ENCODE measurements at regions of chr4 and their contacts with region 1.

Region 1: DNA sequence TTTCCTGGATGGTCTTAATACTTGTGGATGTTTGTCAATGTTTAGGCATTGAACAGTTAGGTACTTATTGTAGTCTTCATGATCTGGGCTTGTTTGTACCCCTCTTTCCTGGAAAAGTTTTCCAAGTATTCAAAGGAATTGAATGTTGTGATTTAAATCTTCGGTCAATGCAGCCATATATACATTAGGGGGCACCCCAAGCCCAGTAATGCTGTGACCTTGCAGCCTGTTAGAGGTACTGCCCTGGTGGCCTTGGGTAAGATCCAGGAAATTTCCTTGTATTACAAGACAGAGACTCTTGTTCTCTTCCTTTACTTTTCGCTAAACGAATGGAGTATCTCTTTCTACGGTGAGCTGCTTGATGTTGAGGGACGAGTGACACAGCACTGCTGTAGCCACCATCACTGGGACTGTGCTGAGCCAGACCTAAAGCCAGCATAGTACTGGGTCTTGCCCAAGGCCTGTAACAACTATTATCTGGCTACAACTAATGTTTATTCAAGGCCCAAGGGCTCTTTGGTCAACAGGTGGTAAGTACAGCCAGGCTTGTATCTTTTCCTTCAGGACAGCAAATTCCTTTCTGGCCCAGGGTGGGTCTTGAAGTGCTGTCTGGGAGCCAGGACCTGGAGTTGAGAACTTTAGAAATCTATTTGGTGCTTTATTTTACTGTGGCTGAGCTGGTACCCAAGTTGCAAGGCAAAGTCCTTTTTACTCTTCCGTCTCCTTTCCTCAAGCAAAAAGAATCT is 118.3 kb upstream of the ATOH1 start:
- DNase-seq: peak; percentile 6
- H3K4me3 Mint-ChIP-seq: no peak overlapping the region
- H3K27ac Mint-ChIP-seq: no peak overlapping the region
- H3K4me1 Mint-ChIP-seq: no peaks in the 10 kb centered on the region
- H3K27me3 Mint-ChIP-seq: no peaks in the 10 kb centered on the region
- CTCF ChIP-seq: no peak

Region 2: GRCh38 chr4:93764639-93765246 is 54.5 kb after region 1 on chr4:
- CTCF ChIA-PET with region 1: no interaction called
- intact Hi-C with region 1: loop called (anchors 1 kb)
- DNase-seq: peak; percentile 17
- H3K4me3 Mint-ChIP-seq: no peak overlapping the region
- H3K27ac Mint-ChIP-seq: no peak overlapping the region
- H3K4me1 Mint-ChIP-seq: no peaks in the 10 kb centered on the region
- H3K27me3 Mint-ChIP-seq: no peaks in the 10 kb centered on the region
- CTCF ChIP-seq: no peak

Measured in Calu3 (cell line).